Caco-2 (cell line): ENCODE measurements at regions of chr15 and their contacts with region 1.

Region 1: DNA sequence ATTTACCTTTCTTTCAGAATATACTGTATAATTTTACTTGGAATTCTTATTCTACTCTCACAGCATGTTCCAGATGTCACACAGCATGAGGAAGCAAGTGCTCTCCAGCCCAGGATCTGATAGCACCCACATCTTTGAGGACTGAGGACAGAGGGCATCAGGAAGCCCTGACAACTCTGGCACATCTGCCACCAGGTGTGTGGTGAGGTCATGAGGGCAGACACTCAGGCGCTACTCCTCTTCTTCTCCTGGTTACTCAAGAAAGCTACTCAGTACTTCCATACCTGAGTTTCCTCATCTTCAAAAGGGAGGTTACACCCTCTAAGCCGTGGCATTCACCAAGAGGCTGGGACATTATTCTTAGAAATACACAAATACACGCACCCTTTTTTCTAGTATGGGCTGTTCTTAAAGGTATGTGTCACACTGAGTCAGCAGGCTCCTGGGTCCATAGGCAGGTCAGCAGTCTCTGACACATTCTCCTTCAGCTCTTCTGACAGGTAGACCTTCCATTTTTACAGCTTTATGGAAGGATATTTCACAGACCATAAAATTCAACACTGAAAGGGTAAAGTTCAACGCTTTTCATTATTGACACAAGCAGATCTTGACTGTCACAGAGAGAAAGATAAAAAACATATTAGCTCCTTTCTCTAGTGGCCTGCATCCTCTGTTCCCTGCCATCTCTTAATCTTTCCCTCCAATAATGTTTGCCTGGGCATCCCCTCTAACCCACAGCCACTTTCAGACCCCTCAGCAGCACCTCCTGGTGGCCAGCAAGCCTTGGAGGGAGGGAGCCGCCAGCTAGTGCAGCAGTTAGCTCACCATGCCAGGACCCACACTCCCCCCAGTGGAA is 103.2 kb upstream of the TJP1 start:
- DNase-seq: peak; percentile 93 to 94
- H3K4me3 ChIP-seq: no peak overlapping the region
- H3K4me3 Mint-ChIP-seq: peak overlapping the region; percentile 68
- H3K27ac Mint-ChIP-seq: peak overlapping the region; percentile 87
- H3K4me1 ChIP-seq: peaks cover 57% of the 10 kb centered on the region
- H3K4me1 Mint-ChIP-seq: peaks cover 58% of the 10 kb centered on the region
- H3K27me3 ChIP-seq: no peaks in the 10 kb centered on the region
- H3K27me3 Mint-ChIP-seq: no peaks in the 10 kb centered on the region
- CTCF ChIP-seq: peak; percentile 86 to 95

Region 2: DNA sequence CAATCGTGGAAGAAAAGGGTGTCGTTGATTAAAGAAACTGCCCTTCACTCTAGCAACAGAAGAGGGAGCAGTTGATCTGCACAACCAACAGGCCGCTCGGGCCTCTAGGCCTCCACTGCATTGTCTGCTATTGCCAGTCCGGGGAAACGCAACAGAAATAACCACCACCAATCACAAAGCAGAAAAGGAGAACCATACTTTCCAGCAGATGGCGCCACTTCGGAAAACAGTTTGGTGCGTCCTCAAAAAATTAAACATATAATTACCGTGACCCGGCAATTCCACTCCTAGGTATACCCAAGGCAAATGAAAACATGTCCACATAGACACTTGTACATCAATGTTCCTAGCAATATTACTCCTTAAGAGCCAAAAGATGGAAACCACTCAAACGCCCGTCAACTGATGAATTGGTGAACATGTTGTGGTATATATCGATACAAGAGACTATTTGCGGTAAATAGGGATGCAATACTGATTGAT is 257.3 kb before region 1 on chr15:
- CTCF ChIA-PET with region 1: interaction called, 6 read pairs
- POLR2A ChIA-PET with region 1: interaction called, 3 read pairs
- intact Hi-C with region 1: loop called (anchors 1 kb)
- DNase-seq: peak; percentile 88 to 91
- H3K4me3 ChIP-seq: no peak overlapping the region
- H3K4me3 Mint-ChIP-seq: no peak overlapping the region
- H3K27ac Mint-ChIP-seq: no peak overlapping the region
- H3K4me1 ChIP-seq: peaks cover 8% of the 10 kb centered on the region
- H3K4me1 Mint-ChIP-seq: no peaks in the 10 kb centered on the region
- H3K27me3 ChIP-seq: no peaks in the 10 kb centered on the region
- H3K27me3 Mint-ChIP-seq: peaks cover 4% of the 10 kb centered on the region
- CTCF ChIP-seq: peak; percentile 84 to 89

Region 3: GRCh38 chr15:29747837-29748417 is 177.5 kb before region 1 on chr15:
- CTCF ChIA-PET with region 1: interaction called, 67 read pairs
- POLR2A ChIA-PET with region 1: interaction called, 7 read pairs
- intact Hi-C with region 1: loop called (anchors 1 kb)
- DNase-seq: no peak
- H3K4me3 ChIP-seq: no peak overlapping the region
- H3K4me3 Mint-ChIP-seq: no peak overlapping the region
- H3K27ac Mint-ChIP-seq: no peak overlapping the region
- H3K4me1 ChIP-seq: 0 out of 2 replicates have a peak, but pooled peaks cover 7% of the 10 kb centered on the region
- H3K4me1 Mint-ChIP-seq: peaks cover 15% of the 10 kb centered on the region
- H3K27me3 ChIP-seq: no peaks in the 10 kb centered on the region
- H3K27me3 Mint-ChIP-seq: no peaks in the 10 kb centered on the region
- CTCF ChIP-seq: peak; percentile 17 to 18

Region 4: DNA sequence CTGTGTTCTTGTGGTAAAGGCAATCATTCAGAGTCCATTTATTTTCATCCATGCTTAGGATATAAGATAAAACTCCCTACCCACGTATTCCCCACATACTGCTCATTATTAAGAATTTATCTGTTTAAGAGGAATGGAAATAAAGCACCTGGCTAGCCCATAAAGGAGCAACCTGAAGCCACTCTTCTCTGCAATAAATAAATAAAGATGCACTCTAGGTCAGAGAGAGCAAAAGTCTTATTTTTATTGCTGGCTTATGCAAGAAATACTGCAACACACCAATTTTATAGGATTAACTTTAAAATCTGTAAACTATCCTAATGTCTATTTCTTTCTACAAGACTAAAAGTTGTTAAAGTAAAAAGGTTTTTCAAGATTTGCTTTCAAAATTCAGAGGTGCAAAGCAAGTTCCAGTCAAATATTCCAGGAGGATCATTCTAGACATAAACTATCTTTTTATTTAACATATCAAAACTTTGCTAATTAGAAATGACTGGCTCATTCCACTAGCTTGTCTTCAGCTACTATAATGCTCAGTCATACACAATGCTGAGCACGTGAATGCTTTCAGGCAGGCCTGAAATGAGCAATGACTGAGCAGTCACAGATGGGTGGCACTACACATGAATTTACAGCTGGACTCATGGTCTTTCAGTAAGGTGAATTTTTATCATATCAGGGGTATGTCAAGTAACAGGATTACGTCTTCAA is 110.3 kb before region 1 on chr15:
- CTCF ChIA-PET with region 1: interaction called, 85 read pairs
- POLR2A ChIA-PET with region 1: interaction called, 133 read pairs
- intact Hi-C with region 1: no loop called
- DNase-seq: no peak
- H3K4me3 ChIP-seq: no peak overlapping the region
- H3K4me3 Mint-ChIP-seq: no peak overlapping the region
- H3K27ac Mint-ChIP-seq: peak overlapping the region; percentile 2
- H3K4me1 ChIP-seq: peaks cover 71% of the 10 kb centered on the region
- H3K4me1 Mint-ChIP-seq: peaks cover 71% of the 10 kb centered on the region
- H3K27me3 ChIP-seq: no peaks in the 10 kb centered on the region
- H3K27me3 Mint-ChIP-seq: no peaks in the 10 kb centered on the region
- CTCF ChIP-seq: no peak

Region 5: DNA sequence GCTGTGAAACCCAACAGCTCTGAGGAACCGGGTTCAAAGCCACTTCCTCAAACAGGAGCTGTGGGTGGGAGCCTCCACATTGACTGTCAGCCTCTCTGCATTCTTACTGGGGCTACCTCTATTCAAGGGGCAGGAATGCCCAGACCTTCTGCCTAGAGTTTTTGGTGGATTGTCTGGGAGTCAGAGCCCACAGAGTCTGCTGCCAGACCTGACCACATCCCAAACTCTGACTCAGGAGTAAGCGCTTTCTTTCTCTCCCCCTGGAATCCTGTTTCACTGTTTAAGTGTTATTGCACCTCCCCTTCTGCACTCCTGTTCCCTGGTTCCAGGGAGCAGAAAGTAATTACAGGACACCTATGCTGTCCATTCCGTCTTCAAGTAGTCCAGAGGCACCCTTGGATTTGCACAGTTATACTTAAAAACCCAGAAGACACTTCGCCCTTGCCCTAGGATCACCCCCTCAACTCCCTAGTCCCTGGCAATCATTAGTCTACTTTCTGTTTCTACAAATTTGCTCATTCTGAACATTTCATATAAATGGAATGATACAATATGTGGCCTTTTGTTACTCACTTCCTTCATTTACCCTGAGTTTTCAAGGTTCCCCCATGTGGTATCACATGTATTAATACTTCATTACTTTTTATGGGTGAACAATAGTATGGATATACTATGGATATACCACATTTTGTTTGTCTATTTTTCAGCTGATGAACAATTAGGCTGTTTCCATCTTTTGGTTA is 65.3 kb before region 1 on chr15:
- CTCF ChIA-PET with region 1: interaction called, 10 read pairs
- POLR2A ChIA-PET with region 1: no interaction called
- intact Hi-C with region 1: loop called (anchors 5 kb)
- DNase-seq: no peak
- H3K4me3 ChIP-seq: no peak overlapping the region
- H3K4me3 Mint-ChIP-seq: no peak overlapping the region
- H3K27ac Mint-ChIP-seq: no peak overlapping the region
- H3K4me1 ChIP-seq: peaks cover 5% of the 10 kb centered on the region; the same call in 1 of the 2 replicates
- H3K4me1 Mint-ChIP-seq: peaks cover 7% of the 10 kb centered on the region
- H3K27me3 ChIP-seq: no peaks in the 10 kb centered on the region
- H3K27me3 Mint-ChIP-seq: no peaks in the 10 kb centered on the region
- CTCF ChIP-seq: no peak

Region 6: GRCh38 chr15:29883126-29883525 is 42.3 kb before region 1 on chr15:
- CTCF ChIA-PET with region 1: interaction called, 8 read pairs
- POLR2A ChIA-PET with region 1: no interaction called
- intact Hi-C with region 1: loop called (anchors 2 kb)
- DNase-seq: no peak
- H3K4me3 ChIP-seq: no peak overlapping the region
- H3K4me3 Mint-ChIP-seq: no peak overlapping the region
- H3K27ac Mint-ChIP-seq: no peak overlapping the region
- H3K4me1 ChIP-seq: 0 out of 2 replicates have a peak, but pooled peaks cover 6% of the 10 kb centered on the region
- H3K4me1 Mint-ChIP-seq: no peaks in the 10 kb centered on the region
- H3K27me3 ChIP-seq: no peaks in the 10 kb centered on the region
- H3K27me3 Mint-ChIP-seq: no peaks in the 10 kb centered on the region
- CTCF ChIP-seq: no peak

Region 7: DNA sequence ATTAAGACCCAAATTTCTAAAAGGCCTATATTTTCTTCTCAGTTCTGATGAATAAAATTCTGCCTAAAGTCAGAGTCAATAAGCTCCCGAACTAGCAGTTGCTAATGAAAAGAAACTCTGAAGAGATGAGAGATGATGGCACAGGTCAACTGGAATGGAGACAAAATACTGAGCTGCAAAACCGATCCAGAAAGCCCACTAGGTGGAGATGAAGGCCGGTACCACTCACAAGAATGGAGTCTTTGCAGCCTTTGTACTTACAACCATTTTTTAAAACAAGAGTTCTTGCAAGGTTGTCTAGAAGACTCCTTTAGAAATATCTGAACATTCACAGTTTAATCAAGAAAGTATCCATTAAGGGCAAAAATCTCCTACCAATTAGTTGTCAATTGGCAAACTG is 16.7 kb after region 1 on chr15:
- CTCF ChIA-PET with region 1: interaction called, 15 read pairs
- POLR2A ChIA-PET with region 1: no interaction called
- intact Hi-C with region 1: no loop called
- DNase-seq: peak in 1 of 2 experiments; percentile 44
- H3K4me3 ChIP-seq: no peak overlapping the region
- H3K4me3 Mint-ChIP-seq: no peak overlapping the region
- H3K27ac Mint-ChIP-seq: no peak overlapping the region
- H3K4me1 ChIP-seq: peaks cover 9% of the 10 kb centered on the region; the same call in 1 of the 2 replicates
- H3K4me1 Mint-ChIP-seq: no peaks in the 10 kb centered on the region
- H3K27me3 ChIP-seq: no peaks in the 10 kb centered on the region
- H3K27me3 Mint-ChIP-seq: no peaks in the 10 kb centered on the region
- CTCF ChIP-seq: peak; percentile 39 to 64

Region 8: DNA sequence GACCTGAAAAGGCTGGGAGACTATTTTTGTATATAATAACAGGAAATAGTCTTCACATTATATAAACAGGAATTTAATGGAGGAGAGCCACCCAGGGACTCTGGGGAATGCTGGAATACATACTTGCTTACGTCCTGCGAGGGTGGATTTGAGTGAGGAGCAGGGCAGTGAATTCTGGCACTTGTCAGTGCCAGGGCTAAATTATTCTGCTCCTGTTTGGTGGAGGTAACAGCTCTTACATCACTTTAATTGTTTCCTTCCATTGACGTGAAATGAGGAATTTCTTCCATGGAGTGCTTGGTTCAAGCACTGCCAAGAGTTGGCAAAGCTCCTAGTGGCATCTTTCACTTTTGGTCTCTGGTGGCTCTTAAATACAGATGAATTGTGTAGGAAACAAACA is 63.2 kb after region 1 on chr15:
- CTCF ChIA-PET with region 1: no interaction called
- POLR2A ChIA-PET with region 1: no interaction called
- intact Hi-C with region 1: no loop called
- DNase-seq: no peak
- H3K4me3 ChIP-seq: no peak overlapping the region
- H3K4me3 Mint-ChIP-seq: no peak overlapping the region
- H3K27ac Mint-ChIP-seq: no peak overlapping the region
- H3K4me1 ChIP-seq: no peaks in the 10 kb centered on the region
- H3K4me1 Mint-ChIP-seq: peaks cover 12% of the 10 kb centered on the region
- H3K27me3 ChIP-seq: no peaks in the 10 kb centered on the region
- H3K27me3 Mint-ChIP-seq: peaks cover 6% of the 10 kb centered on the region
- CTCF ChIP-seq: no peak